ENCODE measurements at regions of chr6 and their contacts with region 1.

Region 1: DNA sequence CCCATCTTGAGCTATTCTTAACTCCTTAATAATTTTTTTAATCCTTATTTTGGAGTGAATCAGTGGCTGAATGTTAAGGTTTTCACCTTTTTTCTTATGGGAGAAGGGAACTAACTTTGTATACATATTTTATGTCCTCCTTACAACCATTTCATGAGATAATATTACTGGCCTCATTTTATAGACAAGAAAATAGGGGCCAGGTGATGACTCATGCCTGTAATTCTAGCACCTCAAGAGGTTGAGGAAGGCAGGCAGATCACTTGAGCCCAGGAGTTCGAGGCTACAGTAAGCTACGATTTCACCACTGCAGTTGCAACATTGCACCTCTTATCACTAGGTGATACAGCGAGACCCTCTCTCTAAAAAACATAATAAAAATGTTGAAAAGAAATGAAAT is 128.7 kb downstream of the TMEM242 start:
- DNase-seq: no peak
- H3K4me3 ChIP-seq: no peak overlapping the region
- H3K27ac ChIP-seq: no peak overlapping the region; the same call in 1 of the 2 replicates
- H3K4me1 ChIP-seq: no peaks in the 10 kb centered on the region; a peak in 2 of 7 replicates
- H3K27me3 ChIP-seq: no peaks in the 10 kb centered on the region; a peak in 1 of 7 replicates
- CTCF ChIP-seq: no peak
- EP300 ChIP-seq: no peak
- POLR2A ChIP-seq: no peak
- RAD21 ChIP-seq: no peak

Region 2: DNA sequence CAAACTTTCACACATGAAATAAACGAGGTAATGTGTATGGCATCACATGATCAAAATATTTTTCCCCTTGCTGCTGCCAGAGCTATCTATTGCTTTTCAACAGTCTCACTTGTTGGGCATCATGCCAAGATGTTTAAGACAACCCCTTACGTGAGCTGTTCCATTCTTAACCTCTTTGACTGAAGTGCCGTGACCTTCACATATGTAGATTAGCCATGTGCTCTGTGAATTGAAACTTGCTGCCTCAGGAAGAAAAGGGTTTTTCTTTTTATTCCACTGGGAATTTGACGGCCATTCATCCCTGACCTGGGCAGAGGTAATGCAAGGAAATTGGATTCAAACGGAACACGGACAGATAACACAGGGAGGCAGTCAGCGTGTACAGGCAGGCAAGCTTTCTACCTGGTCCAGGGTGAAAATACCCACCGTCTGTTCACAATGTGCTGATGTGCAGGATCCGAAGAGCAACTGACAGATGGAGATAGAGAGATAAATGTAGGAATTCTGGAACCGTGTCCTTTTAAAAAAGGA is 403.3 kb before region 1 on chr6:
- CTCF ChIA-PET with region 1: no interaction called
- POLR2A ChIA-PET with region 1: no interaction called
- DNase-seq: no peak
- H3K4me3 ChIP-seq: peak overlapping the region in 3 of 4 experiments; percentile 15 to 35 (median 24); a peak in 5 of 8 replicates
- H3K27ac ChIP-seq: no peak overlapping the region
- H3K4me1 ChIP-seq: peaks cover 8 to 45% (median 28%) of the 10 kb centered on the region in 4 experiments
- H3K27me3 ChIP-seq: no peaks in the 10 kb centered on the region
- CTCF ChIP-seq: no peak
- EP300 ChIP-seq: no peak
- POLR2A ChIP-seq: no peak
- RAD21 ChIP-seq: no peak

Region 3: DNA sequence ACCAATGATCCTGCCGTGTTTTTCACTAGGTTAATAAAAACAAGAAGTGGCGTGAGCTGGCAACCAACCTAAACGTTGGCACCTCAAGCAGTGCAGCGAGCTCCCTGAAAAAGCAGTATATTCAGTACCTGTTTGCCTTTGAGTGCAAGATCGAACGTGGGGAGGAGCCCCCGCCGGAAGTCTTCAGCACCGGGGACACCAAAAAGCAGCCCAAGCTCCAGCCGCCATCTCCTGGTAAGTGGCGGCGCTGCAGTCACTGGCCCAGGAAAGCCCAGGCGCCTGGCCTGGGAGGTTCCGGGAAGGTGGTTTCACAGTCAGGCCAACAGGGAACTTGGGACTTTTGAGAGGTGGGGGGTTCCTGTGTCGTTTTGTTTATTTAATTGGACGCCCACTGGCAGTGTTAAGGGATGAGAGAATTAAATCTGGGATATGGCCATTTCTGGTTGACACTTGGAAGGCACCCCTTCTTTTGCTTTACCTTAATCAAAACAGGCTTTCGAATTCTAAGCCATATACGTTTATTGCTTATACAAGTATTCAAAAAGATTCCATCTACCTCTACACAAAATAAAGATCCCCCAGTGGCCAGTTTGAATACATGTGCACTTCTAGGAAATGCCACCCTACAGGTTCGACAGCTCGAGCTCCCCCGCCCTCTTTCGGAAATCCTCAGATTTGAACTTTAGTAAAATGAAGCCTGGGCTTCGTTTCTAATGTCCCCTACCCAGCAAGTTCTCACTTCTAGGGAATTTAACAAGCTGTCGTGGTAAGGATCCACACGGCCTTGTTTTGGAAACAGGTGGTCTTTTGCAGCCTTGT is 10.2 kb before region 1 on chr6:
- CTCF ChIA-PET with region 1: interaction called, 11 read pairs
- POLR2A ChIA-PET with region 1: interaction called, 3 read pairs
- DNase-seq: peak; percentile 57 to 87
- H3K4me3 ChIP-seq: no peak overlapping the region
- H3K27ac ChIP-seq: no peak overlapping the region
- H3K4me1 ChIP-seq: no peaks in the 10 kb centered on the region
- H3K27me3 ChIP-seq: no peaks in the 10 kb centered on the region
- CTCF ChIP-seq: peak; percentile 86 to 96 (median 93)
- EP300 ChIP-seq: no peak
- POLR2A ChIP-seq: no peak
- RAD21 ChIP-seq: peak; percentile 98 to 99